Left cardiac atrium (tissue), 4 donors: ENCODE measurements at regions of chr5 and their contacts with region 1.

Region 1: GRCh38 chr5:34486160-34486848 is 169.8 kb upstream of the RAI14 start:
- DNase-seq: peak; percentile 84
- ATAC-seq: peak; percentile 68 to 81

Region 2: GRCh38 chr5:34522599-34523386 is 36.5 kb after region 1 on chr5:
- intact Hi-C with region 1: loop called in 1 of 2 experiments (anchors 5 kb)
- DNase-seq: peak; percentile 75
- ATAC-seq: peak; percentile 84 to 85

Region 3: GRCh38 chr5:34898258-34898895 is 412.1 kb after region 1 on chr5:
- intact Hi-C with region 1: loop called (anchors 2 to 5 kb)
- DNase-seq: peak; percentile 61
- ATAC-seq: peak; percentile 68 to 85

Region 4: DNA sequence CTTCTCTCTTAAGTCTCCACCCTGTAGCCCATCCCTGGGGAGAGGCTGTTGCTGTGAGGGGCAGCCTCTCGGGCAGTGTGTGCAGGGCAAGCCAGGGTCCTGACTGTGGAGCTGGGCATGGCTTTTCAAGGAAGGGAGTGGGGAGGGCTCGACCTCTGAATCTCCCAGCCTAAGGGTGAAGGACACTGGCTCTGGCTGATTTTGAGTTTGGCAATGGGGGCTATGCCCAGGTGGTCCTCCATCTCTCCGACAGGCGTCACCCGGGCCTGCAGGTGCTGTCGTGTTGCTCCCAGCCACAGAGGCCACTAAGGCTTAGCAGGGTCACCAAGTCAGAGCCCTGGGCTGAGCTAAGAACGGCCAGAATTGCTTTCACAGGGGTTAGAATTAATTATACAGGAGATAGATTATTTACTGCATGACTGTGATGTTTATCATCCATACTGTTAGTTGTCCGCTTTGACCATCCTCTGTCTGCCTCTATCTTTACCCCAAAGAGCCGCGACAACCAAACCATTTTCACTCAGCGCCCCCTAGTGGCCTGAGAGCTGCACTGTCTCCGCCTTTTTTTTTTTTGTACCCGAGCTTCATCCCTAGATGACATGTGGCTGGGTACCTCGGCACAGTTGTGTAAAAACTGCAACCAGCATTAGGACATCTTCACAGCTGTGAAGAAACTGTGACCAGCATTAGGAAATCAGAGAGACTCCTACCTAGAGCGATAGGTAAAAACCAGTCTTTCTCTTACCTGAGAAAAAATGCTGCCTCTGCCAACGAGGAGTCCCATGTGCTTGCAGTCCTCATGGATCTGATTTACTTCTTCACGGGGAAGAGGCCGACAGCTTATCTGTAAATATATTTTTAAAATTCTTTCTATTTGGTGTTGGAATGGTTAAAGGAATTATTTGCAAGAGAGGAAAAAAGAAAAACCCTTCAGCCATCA is 517.0 kb after region 1 on chr5:
- intact Hi-C with region 1: loop called (anchors 10 kb)
- DNase-seq: peak; percentile 55
- ATAC-seq: peak; percentile 34 to 68